H1 (cell line): ENCODE measurements at regions of chr20 and their contacts with region 1.

Region 1: GRCh38 chr20:45779011-45779915 is 12.4 kb downstream of the WFDC3 start:
- DNase-seq: no peak
- H3K4me3 ChIP-seq: no peak overlapping the region
- H3K27ac ChIP-seq: no peak overlapping the region
- H3K4me1 ChIP-seq: no peaks in the 10 kb centered on the region
- H3K27me3 ChIP-seq: no peaks in the 10 kb centered on the region
- CTCF ChIP-seq: no peak
- EP300 ChIP-seq: no peak
- POLR2A ChIP-seq: no peak
- RAD21 ChIP-seq: no peak

Region 2: DNA sequence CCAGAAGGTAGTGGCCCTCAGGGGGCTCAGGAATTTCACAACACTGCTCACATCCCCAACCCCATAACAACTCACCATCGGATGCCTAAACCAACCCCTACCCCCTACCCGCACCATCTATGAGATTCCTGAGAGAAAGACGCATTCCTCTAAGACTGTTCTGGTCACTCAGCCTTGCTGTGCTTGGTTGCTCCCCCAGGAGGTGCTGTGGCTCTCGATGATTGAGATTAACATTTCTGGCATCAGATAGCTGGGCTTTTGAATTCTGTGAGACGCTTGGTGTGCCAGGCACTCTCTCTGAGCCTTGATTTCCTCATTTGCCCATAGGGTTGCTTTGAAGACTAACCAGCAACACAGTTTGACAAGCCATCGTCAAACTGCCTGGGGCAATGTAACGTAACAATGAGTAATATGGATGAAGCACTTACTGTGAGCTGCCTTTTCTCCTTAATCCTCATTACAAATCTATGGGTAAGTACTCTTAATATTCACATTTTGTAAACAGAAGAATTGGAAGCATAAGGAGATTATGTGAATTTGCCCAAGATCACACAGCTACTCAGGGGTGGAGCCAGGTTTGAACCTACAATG is 241.0 kb before region 1 on chr20:
- CTCF ChIA-PET with region 1: interaction called, 11 read pairs
- POLR2A ChIA-PET with region 1: no interaction called
- DNase-seq: peak in 1 of 2 experiments; percentile 65
- H3K4me3 ChIP-seq: no peak overlapping the region
- H3K27ac ChIP-seq: no peak overlapping the region
- H3K4me1 ChIP-seq: no peaks in the 10 kb centered on the region
- H3K27me3 ChIP-seq: no peaks in the 10 kb centered on the region
- CTCF ChIP-seq: peak; percentile 43 to 75 (median 52)
- EP300 ChIP-seq: no peak
- POLR2A ChIP-seq: no peak
- RAD21 ChIP-seq: peak; percentile 29 to 47; a peak in 2 of 4 replicates

Region 3: DNA sequence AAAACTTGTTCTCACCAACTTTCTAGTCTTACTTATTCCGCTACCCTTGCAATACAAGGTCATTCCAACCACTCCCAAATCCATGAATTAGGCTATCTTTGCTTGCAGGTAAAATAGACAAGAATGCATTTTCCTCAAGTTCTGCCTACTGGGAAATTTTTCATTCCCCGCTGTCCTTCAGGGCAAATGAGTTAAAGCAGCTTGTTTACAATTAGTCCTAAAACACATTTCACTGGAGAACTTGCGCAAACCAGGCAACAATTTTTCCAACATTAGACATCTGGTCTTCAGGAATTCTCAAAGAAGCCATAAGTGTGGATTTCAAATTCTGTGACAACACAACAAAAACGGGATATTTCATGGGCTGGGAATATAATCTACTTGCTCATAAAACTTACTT is 36.7 kb before region 1 on chr20:
- CTCF ChIA-PET with region 1: no interaction called
- POLR2A ChIA-PET with region 1: no interaction called
- DNase-seq: no peak
- H3K4me3 ChIP-seq: no peak overlapping the region
- H3K27ac ChIP-seq: no peak overlapping the region
- H3K4me1 ChIP-seq: no peaks in the 10 kb centered on the region
- H3K27me3 ChIP-seq: no peaks in the 10 kb centered on the region
- CTCF ChIP-seq: no peak
- EP300 ChIP-seq: no peak
- POLR2A ChIP-seq: no peak
- RAD21 ChIP-seq: no peak

Region 4: DNA sequence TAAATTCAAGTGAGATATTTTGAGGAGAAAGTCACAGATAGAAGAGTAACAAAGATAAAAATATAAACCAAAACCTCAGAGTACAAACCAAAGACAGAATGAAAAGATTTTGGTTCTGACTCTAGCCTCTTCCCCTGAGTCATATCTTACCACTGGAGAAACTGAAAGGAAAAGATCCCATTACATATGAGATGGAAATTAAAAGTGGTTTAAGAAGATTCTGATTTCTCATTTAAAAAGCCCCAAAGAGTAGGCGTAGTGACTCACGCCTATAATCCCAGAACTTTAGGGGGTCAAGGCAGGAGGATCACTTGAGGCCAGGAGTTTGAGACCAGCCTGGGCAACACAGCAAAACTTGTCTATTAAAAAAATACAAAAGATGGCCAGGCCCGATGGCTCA is 26.5 kb before region 1 on chr20:
- CTCF ChIA-PET with region 1: no interaction called
- POLR2A ChIA-PET with region 1: no interaction called
- DNase-seq: no peak
- H3K4me3 ChIP-seq: no peak overlapping the region
- H3K27ac ChIP-seq: no peak overlapping the region
- H3K4me1 ChIP-seq: no peaks in the 10 kb centered on the region
- H3K27me3 ChIP-seq: no peaks in the 10 kb centered on the region
- CTCF ChIP-seq: no peak
- EP300 ChIP-seq: no peak
- POLR2A ChIP-seq: no peak
- RAD21 ChIP-seq: no peak